ENCODE measurements at regions of chr15 and their contacts with region 1.

Region 1: GRCh38 chr15:100349696-100350433 is 8.1 kb upstream of the ADAMTS17 start:
- DNase-seq: peak; percentile 86
- H3K4me3 Mint-ChIP-seq: peak overlapping the region; percentile 88
- H3K27ac Mint-ChIP-seq: peak overlapping the region; percentile 86
- H3K4me1 Mint-ChIP-seq: peaks cover 11% of the 10 kb centered on the region
- H3K27me3 Mint-ChIP-seq: peaks cover 8% of the 10 kb centered on the region

Region 2: GRCh38 chr15:100301910-100302431 is 47.9 kb before region 1 on chr15:
- intact Hi-C with region 1: no loop called
- DNase-seq: no peak
- H3K4me3 Mint-ChIP-seq: no peak overlapping the region
- H3K27ac Mint-ChIP-seq: no peak overlapping the region
- H3K4me1 Mint-ChIP-seq: no peaks in the 10 kb centered on the region
- H3K27me3 Mint-ChIP-seq: peaks cover 2% of the 10 kb centered on the region

Region 3: DNA sequence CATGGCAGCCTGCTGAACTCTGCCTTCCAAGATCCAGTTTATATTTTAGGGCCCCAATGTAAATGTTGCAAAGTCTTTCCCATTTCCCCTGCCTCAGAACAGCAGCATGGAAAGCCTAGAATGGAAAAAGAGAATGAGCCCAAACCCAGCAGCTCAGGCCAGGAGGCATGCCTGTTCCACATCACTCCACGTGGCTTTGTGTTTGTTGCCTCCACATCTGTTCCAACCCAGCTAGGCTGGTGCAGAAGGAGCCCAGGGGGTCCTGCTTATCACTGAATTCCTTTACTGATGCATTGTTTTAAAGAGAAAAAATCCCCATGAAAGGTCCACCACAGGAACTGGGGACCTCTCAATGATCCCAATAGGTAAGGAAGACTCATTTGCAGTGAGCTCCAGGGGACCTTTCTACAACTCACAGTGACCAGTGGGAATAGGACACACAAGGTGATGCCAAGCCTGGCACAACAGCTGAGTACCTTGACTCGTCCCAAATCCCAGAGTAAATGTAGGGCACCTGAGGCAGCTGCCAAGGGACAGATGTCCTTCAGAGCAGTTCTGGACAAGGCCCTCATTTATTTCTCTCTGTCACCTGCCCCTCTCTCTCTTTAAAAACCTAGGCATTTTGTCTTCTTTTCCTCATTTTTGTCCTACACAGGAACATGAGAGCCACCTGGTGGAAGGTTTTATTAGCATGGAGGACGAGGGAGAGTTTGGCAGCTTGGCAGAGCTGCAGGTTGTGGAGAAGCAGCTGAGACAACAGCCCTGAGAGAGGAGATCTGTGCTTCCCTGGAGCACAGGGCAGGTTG is 33.6 kb after region 1 on chr15:
- intact Hi-C with region 1: loop called (anchors 1 kb)
- DNase-seq: no peak
- H3K4me3 Mint-ChIP-seq: no peak overlapping the region
- H3K27ac Mint-ChIP-seq: no peak overlapping the region
- H3K4me1 Mint-ChIP-seq: no peaks in the 10 kb centered on the region
- H3K27me3 Mint-ChIP-seq: no peaks in the 10 kb centered on the region

Region 4: DNA sequence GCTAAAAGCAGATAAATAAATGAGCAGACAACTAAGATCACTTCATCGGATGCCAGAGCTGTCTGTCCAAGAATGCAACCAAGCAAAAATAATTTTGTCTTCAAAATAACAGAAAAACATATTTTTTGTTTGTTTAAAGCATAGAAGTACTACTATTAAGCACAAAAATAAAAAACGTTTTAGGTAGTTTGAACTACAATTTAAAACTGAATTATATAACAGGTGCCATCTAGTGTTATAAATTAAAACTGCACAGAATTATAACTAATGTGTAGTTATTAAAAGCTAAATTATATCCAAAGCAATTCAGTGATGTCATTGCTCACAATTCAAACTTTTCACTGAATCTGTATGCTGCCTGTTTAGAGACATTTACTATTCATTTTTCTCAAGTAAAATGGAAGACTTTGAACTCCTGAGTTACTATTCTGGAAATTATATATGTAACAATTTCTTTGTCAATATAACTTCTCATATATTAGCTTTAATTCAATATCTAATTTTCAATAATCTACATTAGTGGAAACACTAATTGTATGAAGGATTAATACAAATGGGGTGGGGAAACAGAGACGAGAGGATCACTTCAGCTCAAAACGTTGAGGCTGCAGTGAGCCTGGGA is 222.6 kb after region 1 on chr15:
- intact Hi-C with region 1: loop called (anchors 1 kb)
- DNase-seq: no peak
- H3K4me3 Mint-ChIP-seq: peak overlapping the region; percentile 74
- H3K27ac Mint-ChIP-seq: peak overlapping the region; percentile 81
- H3K4me1 Mint-ChIP-seq: peaks cover 69% of the 10 kb centered on the region
- H3K27me3 Mint-ChIP-seq: no peaks in the 10 kb centered on the region

Region 5: DNA sequence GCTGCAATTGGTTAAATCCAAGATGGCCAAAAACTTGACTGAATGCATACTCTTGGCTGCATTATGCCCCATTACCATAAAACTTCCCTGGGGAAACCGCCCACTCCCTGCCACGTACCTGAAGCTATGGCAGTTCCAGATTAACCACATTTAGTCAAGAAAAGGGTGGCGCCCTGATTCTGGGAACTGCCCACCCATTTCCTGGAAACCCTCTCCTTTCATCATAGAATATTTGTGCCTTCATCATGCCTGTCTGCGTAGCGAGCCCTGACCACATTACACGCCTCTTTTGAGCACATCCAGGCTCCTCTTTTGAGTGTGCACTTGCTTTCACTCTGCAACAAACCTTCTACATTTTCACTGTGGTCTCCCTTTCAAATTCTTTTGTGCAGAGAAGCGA is 246.9 kb after region 1 on chr15:
- intact Hi-C with region 1: loop called (anchors 1 kb)
- DNase-seq: peak; percentile 92
- H3K4me3 Mint-ChIP-seq: peak overlapping the region; percentile 86
- H3K27ac Mint-ChIP-seq: peak overlapping the region; percentile 97
- H3K4me1 Mint-ChIP-seq: peaks cover 69% of the 10 kb centered on the region
- H3K27me3 Mint-ChIP-seq: peaks cover 3% of the 10 kb centered on the region

Region 6: GRCh38 chr15:100764778-100765466 is 415.1 kb after region 1 on chr15:
- intact Hi-C with region 1: no loop called
- DNase-seq: no peak
- H3K4me3 Mint-ChIP-seq: no peak overlapping the region
- H3K27ac Mint-ChIP-seq: no peak overlapping the region
- H3K4me1 Mint-ChIP-seq: no peaks in the 10 kb centered on the region
- H3K27me3 Mint-ChIP-seq: peaks cover 7% of the 10 kb centered on the region

Region 7: DNA sequence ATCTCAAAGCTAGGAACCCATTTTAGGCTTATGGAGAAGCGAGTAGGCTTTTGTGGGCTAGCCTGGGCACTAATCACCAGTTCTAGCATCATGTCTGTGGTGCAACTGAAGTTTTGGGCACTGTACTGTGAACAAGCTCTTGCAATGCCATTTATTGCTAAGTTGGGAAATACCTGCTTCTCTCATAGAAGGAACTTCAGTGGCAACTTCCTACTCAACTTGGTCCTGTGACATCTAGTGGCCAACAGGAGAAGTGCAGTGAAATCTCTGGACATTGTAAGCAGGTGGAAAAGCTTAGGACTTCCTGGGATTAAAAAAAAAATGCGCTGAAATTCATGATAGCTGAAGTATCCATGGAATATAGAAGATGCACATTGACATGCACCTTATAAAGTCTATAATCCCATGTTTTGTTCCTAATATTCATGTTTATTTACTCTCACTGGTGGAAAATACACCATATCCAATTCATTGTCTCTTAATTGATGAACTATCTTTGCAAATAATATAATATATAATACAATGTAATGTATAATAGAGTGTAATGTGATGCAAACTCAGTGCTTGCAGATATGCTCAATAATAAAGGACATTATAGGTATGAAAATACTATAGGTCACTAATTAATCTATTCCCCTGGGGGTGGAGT is 523.3 kb after region 1 on chr15:
- intact Hi-C with region 1: loop called (anchors 1 kb)
- DNase-seq: peak; percentile 32
- H3K4me3 Mint-ChIP-seq: no peak overlapping the region
- H3K27ac Mint-ChIP-seq: no peak overlapping the region
- H3K4me1 Mint-ChIP-seq: no peaks in the 10 kb centered on the region
- H3K27me3 Mint-ChIP-seq: peaks cover 35% of the 10 kb centered on the region

Region 8: GRCh38 chr15:101008158-101009139 is 658.6 kb after region 1 on chr15:
- intact Hi-C with region 1: loop called (anchors 2 kb)
- DNase-seq: peak; percentile 80
- H3K4me3 Mint-ChIP-seq: peak overlapping the region; percentile 89
- H3K27ac Mint-ChIP-seq: peak overlapping the region; percentile 18
- H3K4me1 Mint-ChIP-seq: peaks cover 19% of the 10 kb centered on the region
- H3K27me3 Mint-ChIP-seq: peaks cover 21% of the 10 kb centered on the region